ENCODE measurements at regions of chr15 and their contacts with region 1.

Region 1: GRCh38 chr15:90291679-90292356 is 26.3 kb downstream of the NGRN start:
- DNase-seq: peak; percentile 71
- ATAC-seq: peak; percentile 58
- H3K4me3 ChIP-seq: no peak overlapping the region
- H3K27ac ChIP-seq: no peak overlapping the region
- H3K4me1 ChIP-seq: peaks cover 7 to 24% of the 10 kb centered on the region in 2 experiments; a peak in 3 of 4 replicates
- H3K27me3 ChIP-seq: no peaks in the 10 kb centered on the region
- CTCF ChIP-seq: no peak
- POLR2A ChIP-seq: no peak
- RAD21 ChIP-seq: no peak

Region 2: DNA sequence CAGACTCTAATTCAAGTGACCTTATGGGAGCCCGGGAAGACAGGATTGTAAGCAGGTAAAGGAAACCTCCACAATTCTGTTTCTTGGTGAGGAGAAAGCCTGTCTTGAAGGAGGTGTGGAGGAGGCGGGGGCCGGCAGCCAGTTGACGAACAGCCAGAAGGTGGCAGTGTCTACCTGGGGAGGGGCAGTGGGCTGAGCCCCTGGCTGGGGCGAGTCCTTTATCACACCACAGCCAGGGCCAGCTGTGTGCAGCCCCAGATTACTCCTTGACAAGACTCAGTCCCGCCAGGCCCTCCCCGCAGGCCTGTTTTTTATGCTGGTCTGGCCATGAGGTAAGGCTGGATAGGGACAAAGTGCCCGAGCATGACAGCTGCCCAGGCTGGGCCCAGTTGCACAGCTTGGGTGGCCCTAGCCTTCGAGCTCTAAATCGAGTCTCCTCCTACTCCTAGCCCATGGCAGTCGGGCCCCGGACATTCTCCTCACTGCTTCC is 148.6 kb before region 1 on chr15:
- CTCF ChIA-PET with region 1: interaction called, 16 read pairs
- POLR2A ChIA-PET with region 1: no interaction called
- RAD21 ChIA-PET with region 1: interaction called, 3 read pairs
- intact Hi-C with region 1: no loop called
- DNase-seq: peak; percentile 57
- ATAC-seq: peak; percentile 99
- H3K4me3 ChIP-seq: no peak overlapping the region
- H3K27ac ChIP-seq: no peak overlapping the region; the same call in 1 of the 2 replicates
- H3K4me1 ChIP-seq: peaks cover 0 to 7% of the 10 kb centered on the region in 2 experiments; a peak in 3 of 4 replicates
- H3K27me3 ChIP-seq: no peaks in the 10 kb centered on the region
- CTCF ChIP-seq: peak; percentile 87 to 92 (median 88)
- POLR2A ChIP-seq: no peak
- RAD21 ChIP-seq: peak; percentile 96

Region 3: DNA sequence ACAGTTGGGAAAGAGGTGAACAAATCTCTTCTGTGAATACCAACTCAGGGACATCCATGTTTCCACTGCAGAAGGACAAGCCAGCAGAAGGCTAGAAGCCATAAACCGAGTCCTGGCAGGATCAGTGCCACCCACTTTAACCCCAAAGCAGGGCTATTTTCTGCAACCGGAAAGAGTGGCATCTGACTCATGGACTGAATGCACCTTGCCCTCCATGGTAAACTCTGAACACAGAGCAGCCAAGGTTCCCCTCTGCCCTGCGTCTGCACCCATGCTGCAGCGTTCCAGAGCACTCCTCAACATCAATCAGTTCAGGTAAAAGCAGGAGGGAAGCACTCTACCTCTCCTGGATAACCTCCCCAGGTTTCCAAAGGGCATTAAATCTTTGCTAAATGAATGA is 27.2 kb before region 1 on chr15:
- CTCF ChIA-PET with region 1: no interaction called
- POLR2A ChIA-PET with region 1: no interaction called
- RAD21 ChIA-PET with region 1: no interaction called
- intact Hi-C with region 1: no loop called
- DNase-seq: no peak
- ATAC-seq: peak; percentile 29
- H3K4me3 ChIP-seq: peak overlapping the region; percentile 74 to 96
- H3K27ac ChIP-seq: peak overlapping the region; percentile 78
- H3K4me1 ChIP-seq: peaks cover 16 to 45% of the 10 kb centered on the region in 2 experiments
- H3K27me3 ChIP-seq: no peaks in the 10 kb centered on the region
- CTCF ChIP-seq: no peak
- POLR2A ChIP-seq: no peak
- RAD21 ChIP-seq: no peak

Region 4: DNA sequence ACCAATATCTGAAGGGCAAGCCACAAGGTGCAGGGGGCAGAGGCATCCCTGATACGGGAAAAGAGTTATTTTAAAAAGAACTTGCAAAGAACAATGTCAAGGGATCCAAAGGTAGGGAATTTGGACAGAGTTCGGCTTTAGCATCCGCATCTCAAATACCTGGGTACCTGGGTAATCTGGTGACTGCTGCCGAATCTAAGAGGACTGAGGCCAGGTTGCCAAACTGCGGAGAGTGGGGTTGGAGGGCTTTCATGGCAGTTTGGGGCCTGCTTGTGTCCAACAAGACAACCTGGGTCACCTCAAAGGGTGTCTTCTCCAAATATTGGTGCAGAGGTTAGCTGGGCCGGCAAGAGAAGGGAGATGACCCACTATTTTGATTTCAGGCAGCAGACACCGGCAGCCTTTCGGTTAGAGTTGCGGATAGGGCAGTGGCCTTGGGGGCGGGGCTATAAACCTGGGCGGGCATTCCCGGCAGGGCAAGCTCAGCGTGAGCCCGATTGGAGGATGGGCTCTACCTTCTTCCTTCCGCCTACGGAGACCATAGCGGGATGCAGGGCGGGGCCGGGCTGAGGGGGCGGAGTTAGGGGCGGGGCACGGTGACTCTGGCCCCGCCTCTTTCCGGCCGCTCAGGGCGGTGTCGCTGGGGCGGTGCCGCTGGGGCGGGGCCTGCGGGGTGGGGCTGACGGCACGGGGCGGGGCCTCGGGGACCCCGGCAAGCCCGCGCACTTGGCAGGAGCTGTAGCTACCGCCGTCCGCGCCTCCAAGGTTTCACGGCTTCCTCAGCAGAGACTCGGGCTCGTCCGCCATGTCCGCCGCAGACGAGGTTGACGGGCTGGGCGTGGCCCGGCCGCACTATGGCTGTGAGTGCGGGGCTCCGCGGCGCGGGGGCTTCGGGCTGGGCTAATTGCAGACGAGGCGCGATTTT is 96.0 kb after region 1 on chr15 and contains the start of gene IQGAP1:
- CTCF ChIA-PET with region 1: no interaction called
- POLR2A ChIA-PET with region 1: no interaction called
- RAD21 ChIA-PET with region 1: no interaction called
- intact Hi-C with region 1: no loop called
- DNase-seq: peak; percentile 92
- ATAC-seq: peak; percentile 95
- H3K4me3 ChIP-seq: peak within 1 kb of the TSS; percentile 75 to 92
- H3K27ac ChIP-seq: peak within 1 kb of the TSS; percentile 70
- H3K4me1 ChIP-seq: peaks cover 6 to 15% of the 10 kb centered on the region in 2 experiments; a peak in 3 of 4 replicates
- H3K27me3 ChIP-seq: no peaks in the 10 kb centered on the region
- CTCF ChIP-seq: no peak
- POLR2A ChIP-seq: peak; percentile 28
- RAD21 ChIP-seq: no peak
- total RNA-seq, gene IQGAP1: 113 TPM

Region 5: DNA sequence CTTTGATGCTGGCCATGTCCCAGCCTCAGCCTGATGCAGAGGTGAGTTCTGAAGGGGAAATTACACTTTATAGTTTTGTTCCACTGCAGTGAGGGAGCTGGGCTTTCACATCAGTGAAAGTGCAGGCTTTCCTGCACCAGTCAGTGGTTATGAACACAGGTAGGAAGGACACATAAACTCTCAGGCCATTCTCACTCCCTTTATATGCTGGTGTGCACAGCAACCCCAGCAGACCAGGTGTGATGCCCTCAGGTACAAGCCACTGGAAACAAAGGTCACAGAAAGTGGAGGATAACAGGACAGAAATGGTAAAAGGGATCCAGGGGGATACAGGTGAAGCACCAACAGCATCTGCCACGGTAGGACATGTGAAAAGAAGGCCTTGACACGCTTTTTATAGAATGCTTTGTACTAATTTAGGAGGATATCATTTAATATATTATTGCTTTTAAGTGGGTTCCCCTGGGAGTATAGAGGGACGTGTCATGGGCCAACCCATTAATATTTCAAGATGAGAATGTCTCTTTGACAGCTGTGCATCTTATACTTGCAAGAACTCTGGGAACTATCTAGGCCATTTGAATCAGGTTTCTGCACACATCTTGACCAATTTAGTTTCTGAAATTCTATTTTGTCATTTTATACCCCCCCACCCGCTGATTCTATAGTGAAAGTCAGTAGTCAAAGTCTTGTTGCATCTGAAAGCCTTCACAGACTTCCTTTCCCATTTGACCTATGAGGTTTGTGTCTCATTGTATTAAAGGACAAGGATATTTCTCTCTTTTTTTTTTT is 400.4 kb after region 1 on chr15:
- CTCF ChIA-PET with region 1: no interaction called
- POLR2A ChIA-PET with region 1: no interaction called
- RAD21 ChIA-PET with region 1: no interaction called
- intact Hi-C with region 1: loop called (anchors 10 kb)
- DNase-seq: no peak
- ATAC-seq: no peak
- H3K4me3 ChIP-seq: no peak overlapping the region
- H3K27ac ChIP-seq: no peak overlapping the region
- H3K4me1 ChIP-seq: 0 out of 4 replicates have a peak, but pooled peaks cover 0 to 3% of the 10 kb centered on the region in 2 experiments
- H3K27me3 ChIP-seq: no peaks in the 10 kb centered on the region
- CTCF ChIP-seq: no peak
- POLR2A ChIP-seq: no peak
- RAD21 ChIP-seq: no peak

Region 6: DNA sequence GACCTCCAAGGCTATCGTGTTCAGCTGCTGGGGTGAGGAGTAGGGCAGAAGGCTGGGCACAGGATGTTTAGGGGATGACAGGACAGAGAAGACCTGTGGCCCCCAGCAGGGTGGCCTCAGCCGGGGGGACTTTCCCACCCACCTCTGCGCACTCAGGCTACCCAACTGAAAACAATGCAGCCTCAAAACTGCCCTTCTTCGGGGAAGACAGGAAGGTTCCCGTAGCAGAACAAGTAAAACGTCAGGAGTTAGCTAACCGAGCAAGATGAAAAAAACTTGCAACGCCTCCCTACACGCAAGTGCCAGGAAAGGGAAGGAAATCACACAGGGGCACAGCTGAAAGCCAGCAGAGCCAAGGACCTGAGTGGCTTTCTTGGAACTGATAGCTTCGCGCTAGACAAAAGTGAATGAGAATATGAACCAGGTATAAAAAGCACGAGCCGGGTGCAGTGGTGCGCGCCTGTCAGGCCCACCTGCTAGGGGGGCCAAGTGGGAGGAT is 538.2 kb after region 1 on chr15:
- CTCF ChIA-PET with region 1: no interaction called
- POLR2A ChIA-PET with region 1: no interaction called
- RAD21 ChIA-PET with region 1: no interaction called
- intact Hi-C with region 1: no loop called
- DNase-seq: no peak
- ATAC-seq: no peak
- H3K4me3 ChIP-seq: no peak overlapping the region
- H3K27ac ChIP-seq: no peak overlapping the region
- H3K4me1 ChIP-seq: no peaks in the 10 kb centered on the region
- H3K27me3 ChIP-seq: no peaks in the 10 kb centered on the region
- CTCF ChIP-seq: no peak
- POLR2A ChIP-seq: no peak
- RAD21 ChIP-seq: no peak

Region 7: GRCh38 chr15:90886041-90886614 is 594.3 kb after region 1 on chr15:
- CTCF ChIA-PET with region 1: interaction called, 15 read pairs
- POLR2A ChIA-PET with region 1: no interaction called
- RAD21 ChIA-PET with region 1: no interaction called
- intact Hi-C with region 1: loop called (anchors 1 kb)
- DNase-seq: no peak
- ATAC-seq: peak; percentile 84
- H3K4me3 ChIP-seq: no peak overlapping the region
- H3K27ac ChIP-seq: no peak overlapping the region
- H3K4me1 ChIP-seq: peaks cover 0 to 3% of the 10 kb centered on the region in 2 experiments; a peak in 1 of 4 replicates
- H3K27me3 ChIP-seq: no peaks in the 10 kb centered on the region
- CTCF ChIP-seq: peak; percentile 95 to 100 (median 98)
- POLR2A ChIP-seq: no peak
- RAD21 ChIP-seq: peak; percentile 99